PC-9 (cell line): ENCODE measurements at regions of chr1 and their contacts with region 1.

Region 1: DNA sequence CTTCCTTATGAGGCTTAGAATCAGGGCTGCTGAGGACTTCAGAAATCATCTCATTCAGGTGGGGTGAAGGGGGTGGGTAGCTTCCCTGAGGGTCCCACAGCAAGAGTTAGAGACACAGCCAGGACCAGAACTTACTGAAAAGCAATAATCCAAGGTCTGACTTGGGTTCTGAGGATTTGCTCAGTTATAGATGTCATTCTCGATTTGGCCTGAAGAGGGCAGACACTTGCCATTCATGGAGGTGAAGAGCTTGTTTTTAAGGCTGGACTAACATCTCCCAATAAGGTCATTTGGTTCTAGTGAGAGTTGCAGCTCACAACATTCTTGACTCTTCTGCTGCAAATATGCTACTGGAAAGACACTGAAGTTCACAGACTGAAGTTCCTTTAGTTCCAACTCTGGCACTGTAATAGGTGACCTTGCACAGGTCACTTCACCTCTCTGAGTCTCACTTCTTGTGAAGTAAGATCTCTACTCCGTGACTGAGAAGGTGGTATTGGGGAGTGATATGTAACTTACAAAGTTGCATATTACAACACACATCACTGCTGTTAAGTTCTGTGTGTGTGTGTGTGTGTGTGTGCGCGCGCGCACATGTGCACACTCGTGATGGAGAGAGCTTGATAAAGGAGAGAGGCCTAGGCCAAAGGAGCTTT is 69.8 kb upstream of the DIRAS3 start:
- DNase-seq: peak; percentile 49 to 64
- H3K4me3 ChIP-seq: no peak overlapping the region
- H3K27ac ChIP-seq: no peak overlapping the region
- H3K4me1 ChIP-seq: no peaks in the 10 kb centered on the region
- H3K27me3 ChIP-seq: no peaks in the 10 kb centered on the region
- CTCF ChIP-seq: peak; percentile 98

Region 2: GRCh38 chr1:67652800-67653199 is 467.5 kb before region 1 on chr1:
- CTCF ChIA-PET with region 1: no interaction called
- POLR2A ChIA-PET with region 1: no interaction called
- intact Hi-C with region 1: no loop called
- DNase-seq: peak; percentile 16 to 80
- H3K4me3 ChIP-seq: no peak overlapping the region
- H3K27ac ChIP-seq: peak overlapping the region; percentile 40
- H3K4me1 ChIP-seq: peaks cover 15% of the 10 kb centered on the region
- H3K27me3 ChIP-seq: no peaks in the 10 kb centered on the region
- CTCF ChIP-seq: no peak

Region 3: DNA sequence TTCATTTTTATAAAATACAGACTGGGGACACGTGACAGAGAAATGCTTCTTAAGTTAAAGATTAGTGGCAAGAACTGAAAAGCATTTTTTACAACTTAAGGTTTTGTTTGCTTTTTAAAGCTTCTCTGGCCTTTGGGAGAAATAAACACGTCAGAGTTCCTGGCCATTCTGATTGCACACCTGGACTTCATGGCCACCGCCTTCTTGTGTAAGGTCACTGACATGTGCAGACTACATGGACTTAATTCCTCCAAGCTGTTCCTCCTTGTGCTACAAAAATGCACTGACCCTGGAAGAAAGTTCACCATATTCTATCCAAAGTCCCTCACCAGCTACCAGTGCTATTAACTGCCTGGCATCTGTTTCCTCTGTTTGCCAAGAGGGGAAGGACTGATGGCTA is 379.1 kb before region 1 on chr1:
- CTCF ChIA-PET with region 1: no interaction called
- POLR2A ChIA-PET with region 1: no interaction called
- intact Hi-C with region 1: no loop called
- DNase-seq: peak in 1 of 2 experiments; percentile 15
- H3K4me3 ChIP-seq: no peak overlapping the region
- H3K27ac ChIP-seq: no peak overlapping the region
- H3K4me1 ChIP-seq: peaks cover 8% of the 10 kb centered on the region
- H3K27me3 ChIP-seq: no peaks in the 10 kb centered on the region
- CTCF ChIP-seq: no peak

Region 4: DNA sequence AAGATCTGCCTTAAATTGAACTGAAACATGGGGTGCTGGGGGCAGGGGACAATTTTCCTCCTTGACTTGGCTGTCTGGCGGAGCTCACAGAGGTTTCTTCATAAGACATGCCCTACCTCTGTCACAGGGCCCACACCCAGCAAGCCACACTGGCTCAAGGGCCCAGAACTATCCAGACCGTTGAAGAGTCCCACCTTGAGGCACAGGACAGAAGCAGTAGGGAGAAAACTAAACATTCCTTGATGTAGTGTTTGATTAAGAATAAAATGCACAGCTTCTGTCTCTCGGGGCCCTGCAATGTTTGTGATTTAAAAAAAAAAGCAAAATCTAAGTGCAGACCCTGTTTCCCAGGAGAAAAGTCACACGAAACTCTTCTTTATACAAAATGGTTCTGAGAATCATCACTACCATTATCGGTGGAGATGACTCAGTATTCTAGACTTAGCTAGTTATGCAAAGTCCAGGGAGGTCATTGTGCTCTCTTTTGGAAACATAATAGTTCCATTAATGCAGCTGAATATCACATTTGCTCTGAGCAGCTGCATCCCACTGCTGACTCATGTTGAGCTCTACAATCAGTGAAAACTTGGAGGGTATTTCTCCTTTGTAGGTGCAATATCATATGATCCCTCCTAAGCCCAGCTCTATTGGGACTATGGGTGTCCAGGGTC is 16.2 kb before region 1 on chr1:
- CTCF ChIA-PET with region 1: no interaction called
- POLR2A ChIA-PET with region 1: no interaction called
- intact Hi-C with region 1: no loop called
- DNase-seq: no peak
- H3K4me3 ChIP-seq: no peak overlapping the region
- H3K27ac ChIP-seq: no peak overlapping the region
- H3K4me1 ChIP-seq: no peaks in the 10 kb centered on the region
- H3K27me3 ChIP-seq: no peaks in the 10 kb centered on the region
- CTCF ChIP-seq: no peak

Region 5: GRCh38 chr1:68232354-68233148 is 112.3 kb after region 1 on chr1 and contains the start of gene WLS:
- CTCF ChIA-PET with region 1: no interaction called
- POLR2A ChIA-PET with region 1: no interaction called
- intact Hi-C with region 1: loop called (anchors 2 kb)
- DNase-seq: peak in 1 of 2 experiments; percentile 59
- H3K4me3 ChIP-seq: peak within 1 kb of the TSS; percentile 61
- H3K27ac ChIP-seq: no peak within 1 kb of the TSS
- H3K4me1 ChIP-seq: peaks cover 6% of the 10 kb centered on the region; the same call in 1 of the 2 replicates
- H3K27me3 ChIP-seq: peaks cover 4% of the 10 kb centered on the region
- CTCF ChIP-seq: no peak; the same call in 1 of the 2 replicates
- total RNA-seq, gene WLS: 19.8 and 30.5 TPM in 2 replicates

Region 6: DNA sequence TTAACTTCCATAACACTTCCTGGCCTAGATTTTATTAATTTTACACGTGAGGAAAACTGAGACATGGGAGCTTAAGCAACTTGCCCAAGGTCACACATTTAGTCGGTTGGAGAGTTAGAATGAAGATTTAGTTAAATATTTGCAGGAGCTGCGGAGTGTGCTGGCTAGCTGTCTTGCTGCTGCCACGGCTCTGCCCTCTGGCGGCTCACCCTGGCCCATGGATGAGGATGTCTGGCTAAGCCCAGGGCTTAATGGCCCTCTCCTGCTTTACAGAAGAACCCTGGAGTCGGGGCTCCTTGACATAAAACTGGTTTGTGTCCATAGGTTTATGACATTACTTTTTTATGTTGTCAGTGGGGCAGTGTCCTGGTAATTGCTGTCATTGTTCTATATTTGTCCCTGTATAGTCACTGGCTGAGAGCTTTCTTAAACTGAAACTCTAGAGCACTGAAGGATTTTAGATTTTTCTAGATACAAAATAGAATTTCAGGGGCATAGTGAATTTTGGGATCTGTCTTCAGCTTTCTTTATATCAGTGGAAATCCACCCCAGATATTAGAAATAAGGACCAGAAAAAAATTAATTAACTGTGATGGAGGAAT is 200.9 kb after region 1 on chr1:
- CTCF ChIA-PET with region 1: interaction called, 5 read pairs
- POLR2A ChIA-PET with region 1: no interaction called
- intact Hi-C with region 1: loop called (anchors 1 kb)
- DNase-seq: peak in 1 of 2 experiments; percentile 11
- H3K4me3 ChIP-seq: no peak overlapping the region
- H3K27ac ChIP-seq: no peak overlapping the region
- H3K4me1 ChIP-seq: no peaks in the 10 kb centered on the region
- H3K27me3 ChIP-seq: no peaks in the 10 kb centered on the region
- CTCF ChIP-seq: no peak

Region 7: GRCh38 chr1:68384321-68384813 is 264.1 kb after region 1 on chr1:
- CTCF ChIA-PET with region 1: interaction called, 5 read pairs
- POLR2A ChIA-PET with region 1: no interaction called
- intact Hi-C with region 1: loop called (anchors 1 kb)
- DNase-seq: peak; percentile 63 to 99
- H3K4me3 ChIP-seq: no peak overlapping the region
- H3K27ac ChIP-seq: peak overlapping the region; percentile 79
- H3K4me1 ChIP-seq: peaks cover 25% of the 10 kb centered on the region
- H3K27me3 ChIP-seq: no peaks in the 10 kb centered on the region
- CTCF ChIP-seq: peak; percentile 72

Region 8: DNA sequence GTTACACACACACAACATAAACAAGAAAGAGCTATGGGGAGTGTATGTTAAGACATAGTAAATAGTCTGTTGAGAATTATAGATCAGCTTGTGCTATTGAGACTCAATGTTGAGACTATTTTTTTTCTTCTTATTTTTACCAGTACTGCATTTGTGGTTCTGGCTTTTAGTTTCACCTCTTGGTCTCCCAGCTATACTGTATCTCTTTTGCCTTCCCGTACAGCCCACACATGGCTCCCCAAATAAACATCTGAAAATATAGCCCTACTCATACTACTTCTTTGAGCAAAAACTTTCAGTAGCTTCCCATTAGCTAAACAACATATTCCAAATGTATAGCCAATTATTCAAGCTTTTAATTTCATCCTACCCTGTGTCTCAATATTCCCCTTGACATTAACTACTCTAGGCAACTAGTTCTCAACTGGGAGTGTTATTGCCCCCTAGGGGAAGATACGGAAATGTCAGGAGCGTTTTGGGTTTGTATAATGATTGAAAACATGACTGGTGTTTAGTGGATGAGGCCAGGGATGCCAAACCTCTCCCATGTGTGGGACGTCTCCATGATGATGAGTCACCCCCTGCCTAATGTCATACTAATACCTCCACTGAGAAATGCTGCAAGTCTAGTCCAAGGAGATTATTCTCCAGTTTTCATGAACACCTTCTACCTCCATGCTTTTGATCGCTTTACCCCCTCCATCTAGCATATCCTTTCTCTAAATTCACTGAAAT is 322.7 kb after region 1 on chr1:
- CTCF ChIA-PET with region 1: interaction called, 8 read pairs
- POLR2A ChIA-PET with region 1: no interaction called
- intact Hi-C with region 1: loop called (anchors 1 kb)
- DNase-seq: peak; percentile 25 to 55
- H3K4me3 ChIP-seq: no peak overlapping the region
- H3K27ac ChIP-seq: no peak overlapping the region
- H3K4me1 ChIP-seq: no peaks in the 10 kb centered on the region
- H3K27me3 ChIP-seq: no peaks in the 10 kb centered on the region
- CTCF ChIP-seq: peak; percentile 89

Region 9: GRCh38 chr1:68590473-68590872 is 470.2 kb after region 1 on chr1:
- CTCF ChIA-PET with region 1: no interaction called
- POLR2A ChIA-PET with region 1: no interaction called
- intact Hi-C with region 1: loop called (anchors 5 kb)
- DNase-seq: no peak
- H3K4me3 ChIP-seq: no peak overlapping the region
- H3K27ac ChIP-seq: no peak overlapping the region
- H3K4me1 ChIP-seq: no peaks in the 10 kb centered on the region
- H3K27me3 ChIP-seq: no peaks in the 10 kb centered on the region
- CTCF ChIP-seq: peak; percentile 37; the same call in 1 of the 2 replicates

Region 10: GRCh38 chr1:68975212-68975933 is 855.1 kb after region 1 on chr1:
- CTCF ChIA-PET with region 1: no interaction called
- POLR2A ChIA-PET with region 1: no interaction called
- intact Hi-C with region 1: loop called (anchors 10 kb)
- DNase-seq: peak in 1 of 2 experiments; percentile 37
- H3K4me3 ChIP-seq: no peak overlapping the region
- H3K27ac ChIP-seq: no peak overlapping the region
- H3K4me1 ChIP-seq: no peaks in the 10 kb centered on the region
- H3K27me3 ChIP-seq: no peaks in the 10 kb centered on the region
- CTCF ChIP-seq: no peak